PC-3 (cell line): ENCODE measurements at regions of chr4 and their contacts with region 1.

Region 1: DNA sequence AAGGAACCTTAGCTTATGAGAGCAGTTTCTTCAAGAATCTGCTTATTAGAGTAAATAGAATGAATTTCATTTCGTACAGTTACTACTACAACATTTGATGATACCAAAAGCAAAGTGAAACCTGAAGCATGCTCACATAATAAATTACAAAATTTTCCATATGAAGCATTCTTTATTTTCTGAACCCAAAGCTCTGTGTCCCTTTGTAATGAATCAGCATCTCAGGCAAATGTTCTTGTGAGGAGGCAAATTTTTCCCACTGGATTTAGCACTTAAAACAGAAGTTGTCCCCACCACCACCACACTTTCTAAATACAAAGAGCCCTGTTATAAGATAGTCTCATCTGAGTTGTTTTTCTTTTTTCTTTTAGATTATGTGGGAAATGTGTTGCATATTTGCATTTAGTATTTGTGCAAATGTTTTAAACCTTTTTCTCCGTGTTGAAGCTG is 70.7 kb upstream of the NFKB1 start:
- DNase-seq: peak; percentile 3
- ATAC-seq: no peak
- H3K4me3 ChIP-seq: peak overlapping the region; percentile 85
- H3K27ac ChIP-seq: peak overlapping the region; percentile 67
- H3K4me1 ChIP-seq: peaks cover 9% of the 10 kb centered on the region
- H3K27me3 ChIP-seq: no peaks in the 10 kb centered on the region
- CTCF ChIP-seq: no peak

Region 2: DNA sequence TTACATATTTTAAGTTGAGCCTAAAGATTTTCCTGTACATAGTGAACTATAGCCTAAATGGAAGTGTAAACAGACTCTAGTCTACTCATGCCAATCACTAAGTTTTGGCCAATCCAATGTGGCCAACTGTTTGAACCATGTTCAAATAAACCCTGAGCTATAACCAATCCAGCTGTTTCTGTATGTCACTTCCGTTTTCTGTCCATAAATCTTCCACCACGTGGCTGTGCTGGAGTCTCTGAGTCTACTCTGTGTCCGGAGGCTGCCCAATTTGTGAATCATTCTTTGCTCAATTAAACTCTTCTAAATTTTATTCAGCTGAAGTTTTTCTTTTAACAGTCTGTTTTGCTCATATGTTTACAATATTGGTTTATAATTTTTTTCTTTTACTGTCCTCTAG is 752.3 kb before region 1 on chr4:
- CTCF ChIA-PET with region 1: interaction called, 10 read pairs
- POLR2A ChIA-PET with region 1: no interaction called
- intact Hi-C with region 1: no loop called
- DNase-seq: peak; percentile 51
- ATAC-seq: peak; percentile 74
- H3K4me3 ChIP-seq: no peak overlapping the region
- H3K27ac ChIP-seq: no peak overlapping the region
- H3K4me1 ChIP-seq: no peaks in the 10 kb centered on the region
- H3K27me3 ChIP-seq: no peaks in the 10 kb centered on the region
- CTCF ChIP-seq: no peak

Region 3: DNA sequence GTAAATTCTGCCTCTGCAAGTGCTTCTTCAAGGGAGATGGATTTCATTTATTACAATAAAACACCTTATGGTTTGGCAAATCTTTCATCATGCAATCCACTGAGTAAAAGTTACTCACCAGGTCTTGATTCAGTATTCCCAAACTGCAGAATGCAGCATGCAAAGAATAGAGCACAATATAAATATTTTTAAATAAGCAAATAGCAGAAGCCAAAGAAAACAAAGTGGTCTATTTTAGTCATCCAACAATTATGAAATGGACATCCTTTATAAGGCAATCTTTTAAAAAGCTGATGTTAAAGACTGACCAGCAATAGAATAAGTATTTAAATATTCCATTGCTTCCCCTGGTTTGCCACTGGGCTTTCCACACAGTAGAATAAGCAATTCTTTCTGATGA is 144.7 kb before region 1 on chr4:
- CTCF ChIA-PET with region 1: no interaction called
- POLR2A ChIA-PET with region 1: no interaction called
- intact Hi-C with region 1: no loop called
- DNase-seq: no peak
- ATAC-seq: no peak
- H3K4me3 ChIP-seq: no peak overlapping the region
- H3K27ac ChIP-seq: no peak overlapping the region
- H3K4me1 ChIP-seq: no peaks in the 10 kb centered on the region
- H3K27me3 ChIP-seq: no peaks in the 10 kb centered on the region
- CTCF ChIP-seq: no peak

Region 4: GRCh38 chr4:102449751-102450352 is 19.4 kb after region 1 on chr4:
- CTCF ChIA-PET with region 1: interaction called, 10 read pairs
- POLR2A ChIA-PET with region 1: no interaction called
- intact Hi-C with region 1: no loop called
- DNase-seq: peak; percentile 73
- ATAC-seq: peak; percentile 71
- H3K4me3 ChIP-seq: no peak overlapping the region
- H3K27ac ChIP-seq: no peak overlapping the region
- H3K4me1 ChIP-seq: no peaks in the 10 kb centered on the region
- H3K27me3 ChIP-seq: no peaks in the 10 kb centered on the region
- CTCF ChIP-seq: peak; percentile 75

Region 5: DNA sequence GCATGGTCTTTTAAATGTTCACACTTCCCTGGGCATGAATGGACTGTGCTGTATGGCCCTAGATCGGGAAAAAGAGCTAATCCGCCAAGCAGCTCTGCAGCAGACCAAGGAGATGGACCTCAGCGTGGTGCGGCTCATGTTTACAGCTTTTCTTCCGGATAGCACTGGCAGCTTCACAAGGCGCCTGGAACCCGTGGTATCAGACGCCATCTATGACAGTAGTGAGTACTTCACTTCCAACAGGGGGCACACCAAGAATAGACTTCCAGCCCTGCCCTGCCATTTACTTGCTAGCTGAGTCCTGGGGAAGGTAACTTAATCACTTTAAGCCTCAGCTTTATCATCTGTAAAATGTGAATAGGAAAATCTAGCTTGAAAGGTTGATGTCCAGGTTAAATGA is 148.3 kb after region 1 on chr4:
- CTCF ChIA-PET with region 1: interaction called, 13 read pairs
- POLR2A ChIA-PET with region 1: no interaction called
- intact Hi-C with region 1: no loop called
- DNase-seq: no peak
- ATAC-seq: no peak
- H3K4me3 ChIP-seq: no peak overlapping the region
- H3K27ac ChIP-seq: no peak overlapping the region
- H3K4me1 ChIP-seq: peaks cover 46% of the 10 kb centered on the region
- H3K27me3 ChIP-seq: no peaks in the 10 kb centered on the region
- CTCF ChIP-seq: peak; percentile 22; the same call in 1 of the 2 replicates

Region 6: GRCh38 chr4:103008875-103009729 is 578.6 kb after region 1 on chr4:
- CTCF ChIA-PET with region 1: interaction called, 3 read pairs
- POLR2A ChIA-PET with region 1: no interaction called
- intact Hi-C with region 1: loop called (anchors 2 kb)
- DNase-seq: peak; percentile 73
- ATAC-seq: peak; percentile 77
- H3K4me3 ChIP-seq: no peak overlapping the region
- H3K27ac ChIP-seq: no peak overlapping the region
- H3K4me1 ChIP-seq: peaks cover 12% of the 10 kb centered on the region
- H3K27me3 ChIP-seq: no peaks in the 10 kb centered on the region
- CTCF ChIP-seq: peak; percentile 80